H1 (cell line): ENCODE measurements at regions of chr3 and their contacts with region 1.

Region 1: GRCh38 chr3:126703512-126704462 is at the start of gene CHCHD6:
- DNase-seq: peak; percentile 97
- H3K4me3 ChIP-seq: peak within 1 kb of the TSS; percentile 57 to 77 (median 62)
- H3K27ac ChIP-seq: no peak within 1 kb of the TSS
- H3K4me1 ChIP-seq: peaks cover 3 to 8% (median 5%) of the 10 kb centered on the region in 4 experiments; a peak in 6 of 7 replicates
- H3K27me3 ChIP-seq: peaks cover 0 to 15% (median 6%) of the 10 kb centered on the region in 4 experiments; a peak in 5 of 7 replicates
- CTCF ChIP-seq: peak; percentile 15 to 35 (median 16); a peak in 3 of 4 replicates
- EP300 ChIP-seq: no peak
- POLR2A ChIP-seq: no peak; a peak in 1 of 3 replicates
- RAD21 ChIP-seq: peak; percentile 25 to 36; a peak in 3 of 4 replicates
- total RNA-seq, gene CHCHD6: 36.3 and 37.6 TPM in 2 replicates

Region 2: GRCh38 chr3:126679318-126679751 is 24.5 kb before region 1 on chr3:
- CTCF ChIA-PET with region 1: interaction called, 17 read pairs
- POLR2A ChIA-PET with region 1: no interaction called
- DNase-seq: peak; percentile 79 to 99
- H3K4me3 ChIP-seq: peak overlapping the region in 1 of 4 experiments; percentile 45; a peak in 1 of 8 replicates
- H3K27ac ChIP-seq: no peak overlapping the region
- H3K4me1 ChIP-seq: peaks cover 0 to 8% (median 6%) of the 10 kb centered on the region in 4 experiments; a peak in 5 of 7 replicates
- H3K27me3 ChIP-seq: peaks cover 2 to 19% (median 14%) of the 10 kb centered on the region in 4 experiments; a peak in 6 of 7 replicates
- CTCF ChIP-seq: peak; percentile 93 to 94 (median 94)
- EP300 ChIP-seq: no peak
- POLR2A ChIP-seq: no peak
- RAD21 ChIP-seq: peak; percentile 91 to 96

Region 3: GRCh38 chr3:126692845-126693244 is 10.9 kb before region 1 on chr3:
- CTCF ChIA-PET with region 1: interaction called, 19 read pairs
- POLR2A ChIA-PET with region 1: interaction called, 3 read pairs
- DNase-seq: peak in 1 of 2 experiments; percentile 34
- H3K4me3 ChIP-seq: no peak overlapping the region
- H3K27ac ChIP-seq: no peak overlapping the region
- H3K4me1 ChIP-seq: no peaks in the 10 kb centered on the region; a peak in 1 of 7 replicates
- H3K27me3 ChIP-seq: no peaks in the 10 kb centered on the region
- CTCF ChIP-seq: no peak
- EP300 ChIP-seq: no peak
- POLR2A ChIP-seq: no peak
- RAD21 ChIP-seq: no peak

Region 4: DNA sequence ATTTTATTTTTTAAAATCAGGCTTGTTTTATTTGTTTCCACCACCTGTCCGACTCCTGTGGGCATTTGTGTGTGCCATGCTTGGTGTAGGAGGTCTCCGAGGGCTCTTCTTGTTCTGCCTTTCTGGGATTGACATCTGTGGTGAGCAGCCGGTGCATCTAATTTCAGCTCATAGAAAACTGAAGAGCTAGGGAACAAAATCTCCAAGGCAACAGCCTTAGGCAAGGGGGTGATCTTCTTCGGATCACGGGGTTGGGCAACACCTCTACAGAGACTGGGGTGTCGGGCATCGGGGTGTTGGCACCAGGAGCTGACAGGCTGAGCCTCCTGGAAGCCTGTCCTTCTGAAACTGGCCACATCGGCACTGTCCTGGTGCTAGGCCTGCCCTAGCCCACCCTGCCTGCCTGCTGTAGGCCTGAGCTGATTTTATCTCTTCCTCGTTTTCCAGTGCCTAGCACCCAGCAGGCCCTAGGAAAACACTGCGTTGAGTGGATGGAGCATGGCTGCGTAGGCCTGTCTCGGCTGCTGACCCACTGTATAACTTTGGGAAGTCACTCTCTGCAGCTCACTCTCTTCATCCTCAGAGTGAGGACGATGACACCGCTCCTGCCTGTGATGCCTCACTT is 10.6 kb after region 1 on chr3:
- CTCF ChIA-PET with region 1: interaction called, 16 read pairs
- POLR2A ChIA-PET with region 1: interaction called, 5 read pairs
- DNase-seq: no peak
- H3K4me3 ChIP-seq: no peak overlapping the region
- H3K27ac ChIP-seq: no peak overlapping the region
- H3K4me1 ChIP-seq: peaks cover 0 to 8% (median 0%) of the 10 kb centered on the region in 4 experiments; a peak in 2 of 7 replicates
- H3K27me3 ChIP-seq: no peaks in the 10 kb centered on the region
- CTCF ChIP-seq: no peak
- EP300 ChIP-seq: no peak
- POLR2A ChIP-seq: no peak
- RAD21 ChIP-seq: no peak

Region 5: GRCh38 chr3:126858887-126859286 is 155.1 kb after region 1 on chr3:
- CTCF ChIA-PET with region 1: no interaction called
- POLR2A ChIA-PET with region 1: no interaction called
- DNase-seq: no peak
- H3K4me3 ChIP-seq: no peak overlapping the region
- H3K27ac ChIP-seq: no peak overlapping the region
- H3K4me1 ChIP-seq: peaks cover 0 to 15% (median 10%) of the 10 kb centered on the region in 4 experiments; a peak in 6 of 7 replicates
- H3K27me3 ChIP-seq: no peaks in the 10 kb centered on the region; a peak in 1 of 7 replicates
- CTCF ChIP-seq: no peak
- EP300 ChIP-seq: no peak
- POLR2A ChIP-seq: no peak
- RAD21 ChIP-seq: no peak